ENCODE measurements at regions of chr3 and their contacts with region 1.

Region 1: GRCh38 chr3:42229942-42230688 is 35.9 kb downstream of the CCK start:
- DNase-seq: peak; percentile 35
- H3K4me3 ChIP-seq: no peak overlapping the region
- H3K27ac ChIP-seq: peak overlapping the region; percentile 45 to 73
- H3K4me1 ChIP-seq: peaks cover 8% of the 10 kb centered on the region
- H3K27me3 ChIP-seq: no peaks in the 10 kb centered on the region
- CTCF ChIP-seq: peak; percentile 33 to 84 (median 64)
- POLR2A ChIP-seq: no peak

Region 2: GRCh38 chr3:42547401-42547945 is 317.4 kb after region 1 on chr3:
- intact Hi-C with region 1: loop called (anchors 10 kb)
- DNase-seq: peak; percentile 68
- H3K4me3 ChIP-seq: no peak overlapping the region
- H3K27ac ChIP-seq: peak overlapping the region; percentile 42 to 90
- H3K4me1 ChIP-seq: peaks cover 45% of the 10 kb centered on the region
- H3K27me3 ChIP-seq: no peaks in the 10 kb centered on the region
- CTCF ChIP-seq: peak; percentile 87 to 97 (median 92)
- POLR2A ChIP-seq: no peak